Activated CD4-positive, alpha-beta T cell treated with anti-CD3 and anti-CD28 coated beads for 36 hours (primary cell): ENCODE measurements at regions of chr10 and their contacts with region 1.

Region 1: DNA sequence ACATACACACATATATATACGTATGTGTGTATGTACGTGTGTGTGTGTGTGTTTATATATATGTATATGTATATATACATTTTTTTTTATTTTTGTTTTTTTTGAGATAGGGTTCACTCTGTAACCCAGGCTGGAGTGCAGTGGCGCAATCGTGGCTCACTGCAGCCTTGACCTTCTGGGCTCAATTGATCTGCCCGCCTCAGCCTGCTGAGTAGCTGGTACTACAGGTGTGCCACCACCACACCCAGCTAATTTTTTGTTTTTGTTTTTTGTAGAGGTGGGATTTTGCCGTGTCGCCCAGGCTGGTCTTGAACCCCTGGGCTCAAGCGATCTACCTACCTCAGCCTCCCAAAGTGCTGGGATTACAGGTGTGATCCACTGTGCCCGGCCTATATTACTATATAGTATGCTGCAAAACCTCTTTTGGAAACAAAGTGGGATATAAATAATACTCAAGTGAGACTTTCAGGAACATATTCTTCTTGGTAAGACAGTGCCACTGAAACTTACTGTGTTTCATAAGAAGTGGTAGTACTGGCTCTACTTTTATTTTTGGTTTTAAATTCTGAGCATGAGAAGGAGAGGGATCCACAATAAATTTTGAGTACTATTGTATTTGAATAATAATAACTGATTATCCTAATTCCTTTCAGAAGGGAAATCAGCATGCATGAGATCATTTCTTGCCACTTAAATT is 51.0 kb downstream of the MLLT10 start:
- DNase-seq: no peak
- ATAC-seq: no peak
- H3K4me3 Mint-ChIP-seq: no peak overlapping the region
- H3K27ac Mint-ChIP-seq: peak overlapping the region; percentile 67
- H3K4me1 Mint-ChIP-seq: peaks cover 62% of the 10 kb centered on the region
- H3K27me3 Mint-ChIP-seq: no peaks in the 10 kb centered on the region

Region 2: GRCh38 chr10:20142311-20142710 is 1442.7 kb before region 1 on chr10:
- CTCF ChIA-PET with region 1: no interaction called
- POLR2A ChIA-PET with region 1: no interaction called
- intact Hi-C with region 1: no loop called
- DNase-seq: no peak
- ATAC-seq: no peak
- H3K4me3 Mint-ChIP-seq: no peak overlapping the region
- H3K27ac Mint-ChIP-seq: no peak overlapping the region
- H3K4me1 Mint-ChIP-seq: no peaks in the 10 kb centered on the region
- H3K27me3 Mint-ChIP-seq: no peaks in the 10 kb centered on the region

Region 3: GRCh38 chr10:21525367-21526183 is 59.4 kb before region 1 on chr10 and contains the start of gene SKIDA1:
- CTCF ChIA-PET with region 1: no interaction called
- POLR2A ChIA-PET with region 1: no interaction called
- intact Hi-C with region 1: loop called (anchors 2 to 5 kb)
- DNase-seq: peak; percentile 81
- ATAC-seq: peak; percentile 71
- H3K4me3 Mint-ChIP-seq: peak within 1 kb of the TSS; percentile 80
- H3K27ac Mint-ChIP-seq: peak within 1 kb of the TSS; percentile 96
- H3K4me1 Mint-ChIP-seq: peaks cover 24% of the 10 kb centered on the region
- H3K27me3 Mint-ChIP-seq: peaks cover 17% of the 10 kb centered on the region
- total RNA-seq, gene SKIDA1: 0.32 to 0.54 TPM

Region 4: DNA sequence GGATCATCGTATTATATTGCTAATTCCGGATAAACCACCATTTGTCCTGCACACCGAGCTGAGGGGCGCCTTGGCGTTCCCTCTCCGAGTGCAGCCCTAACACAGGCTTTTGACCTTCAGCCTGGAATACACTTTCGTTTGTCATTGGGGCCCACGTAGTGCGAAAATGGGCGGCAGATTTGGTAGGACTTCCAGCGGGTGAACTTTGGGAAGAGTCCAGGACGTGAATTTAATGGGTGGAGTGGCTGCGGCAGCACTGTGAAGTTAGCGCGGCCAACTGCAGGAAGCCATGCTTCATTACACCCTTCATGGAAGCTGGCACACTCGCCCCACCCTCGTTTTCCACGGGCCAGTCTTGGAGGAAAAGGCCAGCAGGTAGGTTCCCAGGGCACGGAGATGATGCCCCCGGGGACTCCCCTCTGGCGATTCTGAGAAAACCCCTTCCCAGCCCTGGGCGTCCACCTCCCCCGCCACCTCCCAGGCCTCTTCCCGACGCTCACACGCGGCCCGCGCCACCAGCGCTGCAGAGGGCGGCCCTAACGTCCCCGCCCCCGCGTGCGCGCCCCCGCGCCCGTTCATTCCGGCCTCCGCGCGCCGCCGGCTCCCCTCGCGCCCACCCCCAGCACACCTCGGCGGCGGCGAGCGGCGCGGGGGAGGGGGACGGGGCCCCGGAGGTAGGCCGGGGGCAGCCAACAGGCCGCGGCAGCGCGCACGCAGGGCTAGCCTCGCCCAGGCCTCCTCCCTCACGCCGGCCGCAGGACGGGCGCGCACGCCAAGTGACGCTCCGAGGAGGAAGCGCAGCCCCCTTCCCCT is 51.3 kb before region 1 on chr10 and contains the start of gene MLLT10:
- CTCF ChIA-PET with region 1: no interaction called
- POLR2A ChIA-PET with region 1: no interaction called
- intact Hi-C with region 1: loop called (anchors 2 to 5 kb)
- DNase-seq: peak; percentile 95
- ATAC-seq: peak; percentile 87
- H3K4me3 Mint-ChIP-seq: peak within 1 kb of the TSS; percentile 95
- H3K27ac Mint-ChIP-seq: peak within 1 kb of the TSS; percentile 98
- H3K4me1 Mint-ChIP-seq: peaks cover 18% of the 10 kb centered on the region
- H3K27me3 Mint-ChIP-seq: no peaks in the 10 kb centered on the region
- total RNA-seq, gene MLLT10: 33.8 to 34.1 TPM

Region 5: DNA sequence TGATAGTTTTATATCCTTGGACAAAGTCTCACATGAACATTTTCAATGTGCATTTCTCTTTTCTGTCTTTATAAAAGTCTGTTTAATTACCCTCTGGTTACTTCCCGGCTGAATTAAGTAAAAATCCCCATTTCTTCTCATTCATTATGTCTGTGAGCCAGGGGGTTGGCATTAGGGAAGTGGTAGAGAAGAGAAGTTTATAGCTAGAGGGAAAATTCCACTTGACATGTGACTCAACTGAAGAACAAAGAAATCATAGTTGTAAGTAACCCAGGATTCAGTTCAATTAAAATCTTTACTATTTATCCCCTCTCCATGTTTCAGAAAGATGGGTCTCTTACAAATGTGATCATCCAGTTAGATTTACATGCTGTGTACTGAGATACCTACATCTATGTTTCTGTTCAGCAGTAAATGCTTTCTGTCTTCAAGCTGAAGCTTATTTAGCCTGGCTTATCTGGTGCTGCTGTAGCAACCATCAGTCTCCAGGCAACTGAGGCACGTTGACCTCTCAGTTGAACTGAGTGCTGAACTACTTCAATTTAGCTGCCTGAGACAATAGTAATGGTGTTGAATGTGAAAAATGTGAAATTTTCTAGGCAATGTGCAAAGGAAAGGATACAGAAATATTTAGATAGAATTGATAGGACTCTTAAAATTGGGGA is 130.7 kb after region 1 on chr10:
- CTCF ChIA-PET with region 1: no interaction called
- POLR2A ChIA-PET with region 1: no interaction called
- intact Hi-C with region 1: loop called in 1 of 2 experiments (anchors 10 kb)
- DNase-seq: no peak
- ATAC-seq: no peak
- H3K4me3 Mint-ChIP-seq: no peak overlapping the region
- H3K27ac Mint-ChIP-seq: no peak overlapping the region
- H3K4me1 Mint-ChIP-seq: peaks cover 17% of the 10 kb centered on the region
- H3K27me3 Mint-ChIP-seq: no peaks in the 10 kb centered on the region